ENCODE measurements at regions of chr17 and their contacts with region 1.

Region 1: GRCh38 chr17:63425482-63425881 is 20.6 kb downstream of the CYB561 start:
- DNase-seq: no peak
- ATAC-seq: peak; percentile 85

Region 2: GRCh38 chr17:63214687-63215086 is 210.8 kb before region 1 on chr17:
- intact Hi-C with region 1: no loop called
- DNase-seq: no peak
- ATAC-seq: no peak

Region 3: DNA sequence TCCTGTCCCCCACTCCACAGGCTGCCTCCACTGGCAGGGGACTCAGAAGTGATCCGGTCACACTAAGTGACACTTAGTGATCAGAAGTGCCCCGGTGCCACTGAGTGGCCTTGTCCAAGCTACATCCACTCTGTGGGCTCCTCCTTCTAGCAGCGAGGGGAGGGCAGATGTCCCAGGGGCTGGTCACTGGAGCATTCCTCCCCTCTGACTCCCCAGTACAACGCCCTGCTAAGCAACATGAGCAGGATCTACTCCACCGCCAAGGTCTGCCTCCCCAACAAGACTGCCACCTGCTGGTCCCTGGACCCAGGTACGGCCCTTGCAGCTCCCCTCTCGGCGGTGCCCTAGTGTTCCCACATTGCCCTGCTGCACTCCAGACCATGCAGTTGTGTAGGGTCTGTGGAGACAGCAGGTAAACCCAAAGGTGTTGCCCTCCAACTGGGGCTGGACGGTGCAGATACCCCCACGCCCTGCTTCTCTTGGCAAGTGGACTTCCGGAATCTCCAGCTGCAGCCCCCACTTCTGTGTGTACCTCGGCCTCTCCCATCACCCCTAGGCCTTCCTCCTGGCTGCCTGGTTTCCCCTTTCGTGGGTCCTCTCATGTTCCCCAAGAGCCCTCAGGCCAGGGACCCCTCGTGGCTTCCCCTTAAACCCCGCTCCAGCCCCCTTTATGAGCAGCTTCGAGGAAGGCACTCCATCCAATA is 53.5 kb after region 1 on chr17:
- intact Hi-C with region 1: loop called (anchors 1 kb)
- DNase-seq: peak; percentile 85
- ATAC-seq: peak; percentile 84

Region 4: DNA sequence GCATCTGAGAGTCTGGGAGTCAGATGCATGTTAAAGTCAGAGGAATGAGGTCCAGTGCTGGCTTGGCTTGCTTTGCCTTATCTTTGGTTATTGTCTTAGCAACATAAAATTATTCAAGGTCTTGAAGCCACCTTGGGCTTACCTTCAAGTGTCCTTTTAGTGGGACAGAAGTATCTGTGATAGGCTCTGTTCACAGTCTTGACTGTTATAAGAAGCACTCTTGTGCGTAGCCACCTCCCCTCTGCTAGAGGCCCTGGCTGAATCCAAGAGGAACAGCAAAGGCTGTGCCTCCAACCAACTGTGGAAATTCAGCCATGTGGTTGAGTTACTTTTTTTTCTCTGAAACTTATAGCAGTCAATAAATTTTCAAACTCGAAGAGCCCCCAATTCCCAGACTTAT is 188.2 kb after region 1 on chr17:
- intact Hi-C with region 1: loop called (anchors 2 kb)
- DNase-seq: no peak
- ATAC-seq: no peak

Measured in Right ventricle myocardium inferior (tissue), 1 donor.